Activated CD4-positive, alpha-beta T cell treated with anti-CD3 and anti-CD28 coated beads, Interleukin-2, amount 10 ng/mL, durations not matched to agents 7 days and 5 days (primary cell): ENCODE measurements at regions of chr6 and their contacts with region 1.

Region 1: DNA sequence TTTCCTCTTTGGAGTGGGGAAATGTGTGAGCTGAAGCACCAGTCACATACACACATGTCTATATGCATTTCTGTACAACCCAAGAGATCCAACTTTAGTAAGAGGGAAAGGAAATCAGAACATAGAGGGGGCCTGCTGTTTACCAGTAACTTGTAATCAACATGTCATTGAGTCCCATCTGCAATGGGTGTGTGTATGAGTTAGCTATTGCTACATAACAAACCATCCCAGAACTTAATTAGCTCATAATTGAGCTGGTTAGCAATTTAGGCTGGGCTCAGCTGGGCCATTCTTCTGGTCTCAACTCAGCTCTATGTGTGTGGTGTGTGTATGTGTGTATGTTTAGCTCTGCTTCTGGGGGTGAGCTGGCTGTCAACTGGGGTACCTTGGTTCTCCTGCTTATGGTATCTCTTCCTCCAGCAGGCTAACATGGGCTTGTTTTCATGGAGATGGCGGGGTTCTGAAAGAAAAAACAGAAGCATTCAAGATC is 10.3 kb upstream of the RPP40 start:
- DNase-seq: no peak
- H3K4me3 Mint-ChIP-seq: no peak overlapping the region
- H3K27ac Mint-ChIP-seq: no peak overlapping the region
- H3K4me1 Mint-ChIP-seq: no peaks in the 10 kb centered on the region
- H3K27me3 Mint-ChIP-seq: no peaks in the 10 kb centered on the region

Region 2: GRCh38 chr6:5003604-5004372 is 10.3 kb before region 1 on chr6 and contains the start of gene RPP40:
- CTCF ChIA-PET with region 1: interaction called, 10 read pairs
- POLR2A ChIA-PET with region 1: no interaction called
- DNase-seq: peak; percentile 99
- H3K4me3 Mint-ChIP-seq: peak within 1 kb of the TSS; percentile 88
- H3K27ac Mint-ChIP-seq: peak within 1 kb of the TSS; percentile 96
- H3K4me1 Mint-ChIP-seq: peaks cover 21% of the 10 kb centered on the region
- H3K27me3 Mint-ChIP-seq: no peaks in the 10 kb centered on the region
- total RNA-seq, gene RPP40: 5.8 to 6.2 TPM

Region 3: DNA sequence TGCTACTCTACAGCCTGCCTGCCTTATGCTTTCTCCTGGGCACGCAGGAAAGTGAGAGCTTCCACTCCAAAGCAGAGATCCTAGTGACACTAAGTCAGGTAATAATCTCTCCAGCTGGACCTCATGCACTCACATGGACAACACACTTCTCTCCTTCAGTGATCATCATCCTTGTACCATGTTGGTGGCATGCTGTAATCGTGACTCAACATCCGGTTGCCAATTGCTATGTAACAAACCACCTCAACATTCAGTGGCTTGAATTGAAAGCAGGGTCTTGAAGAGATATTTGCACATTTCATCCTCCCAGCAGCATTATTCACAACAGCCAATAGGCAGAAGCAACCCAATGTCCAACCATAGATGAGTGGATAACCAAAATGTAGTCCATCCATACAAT is 30.7 kb after region 1 on chr6:
- CTCF ChIA-PET with region 1: no interaction called
- POLR2A ChIA-PET with region 1: no interaction called
- DNase-seq: no peak
- H3K4me3 Mint-ChIP-seq: no peak overlapping the region
- H3K27ac Mint-ChIP-seq: no peak overlapping the region
- H3K4me1 Mint-ChIP-seq: no peaks in the 10 kb centered on the region
- H3K27me3 Mint-ChIP-seq: no peaks in the 10 kb centered on the region